Breast epithelium (tissue), 4 donors: ENCODE measurements at regions of chr2 and their contacts with region 1.

Region 1: GRCh38 chr2:233399306-233400225 is 45.3 kb downstream of the DGKD start:
- DNase-seq: no peak
- H3K4me3 ChIP-seq: no peak overlapping the region
- H3K27ac ChIP-seq: no peak overlapping the region
- H3K4me1 ChIP-seq: no peaks in the 10 kb centered on the region
- H3K27me3 ChIP-seq: no peaks in the 10 kb centered on the region
- CTCF ChIP-seq: no peak
- POLR2A ChIP-seq: no peak

Region 2: DNA sequence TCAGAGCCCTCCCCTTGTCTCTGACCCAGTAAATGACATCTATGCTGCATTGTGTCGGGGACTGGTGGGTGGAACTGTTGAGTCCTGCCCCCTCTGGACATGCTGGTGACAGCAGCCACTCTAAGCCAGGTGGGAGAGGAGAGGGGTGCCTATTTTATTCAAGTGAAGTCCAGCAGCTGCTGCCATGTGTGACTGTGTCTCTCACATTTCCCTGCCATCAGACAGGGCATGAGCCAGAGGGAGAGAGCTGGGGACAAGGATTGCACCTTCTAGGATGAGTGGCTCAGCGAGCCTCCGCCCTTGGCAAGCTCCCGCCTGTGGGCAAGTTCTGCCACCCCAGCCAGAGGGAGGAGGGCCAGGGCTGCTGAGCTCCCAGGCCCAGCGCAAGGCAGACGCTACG is 400.2 kb before region 1 on chr2:
- intact Hi-C with region 1: no loop called
- DNase-seq: peak in 1 of 2 donors; percentile 9
- H3K4me3 ChIP-seq: no peak overlapping the region
- H3K27ac ChIP-seq: no peak overlapping the region
- H3K4me1 ChIP-seq: no peaks in the 10 kb centered on the region
- H3K27me3 ChIP-seq: no peaks in the 10 kb centered on the region
- CTCF ChIP-seq: no peak
- POLR2A ChIP-seq: no peak

Region 3: GRCh38 chr2:233426619-233427342 is 27.2 kb after region 1 on chr2:
- intact Hi-C with region 1: loop called (anchors 1 kb)
- DNase-seq: no peak
- H3K4me3 ChIP-seq: no peak overlapping the region
- H3K27ac ChIP-seq: no peak overlapping the region
- H3K4me1 ChIP-seq: no peaks in the 10 kb centered on the region
- H3K27me3 ChIP-seq: no peaks in the 10 kb centered on the region
- CTCF ChIP-seq: no peak
- POLR2A ChIP-seq: no peak